Mammary epithelial cell (primary cell): ENCODE measurements at regions of chr1 and their contacts with region 1.

Region 1: GRCh38 chr1:87523466-87523865 is 194.8 kb downstream of the LMO4 start:
- DNase-seq: no peak
- H3K4me3 ChIP-seq: no peak overlapping the region
- H3K27ac ChIP-seq: no peak overlapping the region
- H3K4me1 ChIP-seq: no peaks in the 10 kb centered on the region
- H3K27me3 ChIP-seq: no peaks in the 10 kb centered on the region
- CTCF ChIP-seq: no peak

Region 2: GRCh38 chr1:87572891-87573290 is 49.4 kb after region 1 on chr1:
- CTCF ChIA-PET with region 1: no interaction called
- dilution Hi-C with region 1: loop called (anchors 5 kb)
- in situ Hi-C with region 1: no loop called
- intact Hi-C with region 1: no loop called
- DNase-seq: no peak
- H3K4me3 ChIP-seq: no peak overlapping the region
- H3K27ac ChIP-seq: no peak overlapping the region
- H3K4me1 ChIP-seq: no peaks in the 10 kb centered on the region
- H3K27me3 ChIP-seq: no peaks in the 10 kb centered on the region
- CTCF ChIP-seq: no peak